Activated B cell treated with CpG ODN at 0.5 μM for 24 hours (primary cell): ENCODE measurements at regions of chr22 and their contacts with region 1.

Region 1: DNA sequence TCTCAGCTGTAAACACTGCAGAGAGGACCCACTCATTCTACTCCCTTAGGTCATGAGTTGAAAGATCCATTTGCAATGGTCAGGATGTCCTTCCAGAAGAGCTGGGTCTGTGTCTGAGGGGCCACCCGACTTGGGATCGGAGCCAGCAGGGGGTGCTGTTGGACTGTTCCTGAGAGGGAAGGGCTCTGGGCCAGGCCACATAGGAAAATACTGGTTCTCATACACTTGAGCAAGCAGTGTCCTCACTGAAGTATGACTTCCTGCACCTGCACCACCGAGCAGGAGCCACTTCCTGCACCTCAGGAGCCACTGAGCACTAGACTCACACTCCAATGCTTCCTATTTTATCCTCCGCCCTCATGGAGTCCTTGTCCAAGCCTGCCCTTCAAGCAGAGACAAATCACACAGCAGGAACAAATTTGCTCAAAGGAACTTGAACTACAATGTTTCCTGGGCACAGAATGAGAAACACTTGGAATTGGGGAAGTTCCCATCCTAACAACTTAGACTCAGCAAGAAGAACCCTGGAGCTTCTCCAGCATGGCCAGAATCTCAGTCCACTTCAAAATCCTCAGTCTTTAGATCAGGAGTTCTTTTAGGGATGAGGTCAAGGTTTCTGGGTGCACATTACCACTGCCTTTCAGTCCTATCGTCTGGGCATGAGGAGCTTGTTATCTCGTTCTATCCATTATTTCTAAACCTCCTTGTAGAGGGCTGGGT is 36.6 kb upstream of the VPREB1 start:
- DNase-seq: peak; percentile 80
- ATAC-seq: peak; percentile 83
- H3K4me3 Mint-ChIP-seq: peak overlapping the region; percentile 70
- H3K27ac Mint-ChIP-seq: peak overlapping the region; percentile 90
- H3K4me1 Mint-ChIP-seq: peaks cover 56% of the 10 kb centered on the region
- H3K27me3 Mint-ChIP-seq: no peaks in the 10 kb centered on the region
- CTCF ChIP-seq: no peak

Region 2: DNA sequence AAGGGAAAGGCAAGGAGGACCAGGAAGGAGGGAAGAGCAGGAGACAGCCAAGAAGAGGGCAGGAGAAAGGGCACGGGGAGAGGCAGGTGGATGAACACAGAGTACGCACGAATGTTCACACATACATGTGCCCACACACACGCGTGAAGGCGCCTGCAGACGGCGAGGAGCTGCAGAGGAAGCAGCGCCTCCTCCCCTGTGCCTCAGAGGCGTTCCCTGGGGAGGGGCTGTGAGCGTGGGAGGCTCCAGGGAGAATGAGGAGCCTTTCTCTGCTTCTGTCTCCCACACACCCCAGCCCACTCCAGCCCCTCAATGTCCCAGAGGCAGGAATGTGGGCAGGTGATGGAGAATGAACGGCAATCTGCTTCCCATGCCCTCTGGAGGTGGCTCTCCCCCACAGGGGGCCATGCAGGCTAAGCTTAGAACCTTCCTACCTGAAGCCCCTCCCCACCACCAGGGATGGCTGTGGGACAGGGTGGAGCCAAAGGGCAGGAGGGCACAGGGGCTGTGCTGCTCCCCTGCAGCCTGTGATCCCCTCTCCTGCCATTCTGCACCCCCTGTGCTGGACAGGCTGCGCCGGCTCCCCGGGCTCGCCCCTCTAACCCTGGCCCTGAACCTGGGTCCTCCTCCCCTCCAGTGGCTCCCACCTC is 280.7 kb before region 1 on chr22:
- CTCF ChIA-PET with region 1: no interaction called
- POLR2A ChIA-PET with region 1: no interaction called
- intact Hi-C with region 1: no loop called
- DNase-seq: no peak
- ATAC-seq: no peak
- H3K4me3 Mint-ChIP-seq: no peak overlapping the region
- H3K27ac Mint-ChIP-seq: no peak overlapping the region
- H3K4me1 Mint-ChIP-seq: peaks cover 4% of the 10 kb centered on the region
- H3K27me3 Mint-ChIP-seq: no peaks in the 10 kb centered on the region
- CTCF ChIP-seq: no peak

Region 3: DNA sequence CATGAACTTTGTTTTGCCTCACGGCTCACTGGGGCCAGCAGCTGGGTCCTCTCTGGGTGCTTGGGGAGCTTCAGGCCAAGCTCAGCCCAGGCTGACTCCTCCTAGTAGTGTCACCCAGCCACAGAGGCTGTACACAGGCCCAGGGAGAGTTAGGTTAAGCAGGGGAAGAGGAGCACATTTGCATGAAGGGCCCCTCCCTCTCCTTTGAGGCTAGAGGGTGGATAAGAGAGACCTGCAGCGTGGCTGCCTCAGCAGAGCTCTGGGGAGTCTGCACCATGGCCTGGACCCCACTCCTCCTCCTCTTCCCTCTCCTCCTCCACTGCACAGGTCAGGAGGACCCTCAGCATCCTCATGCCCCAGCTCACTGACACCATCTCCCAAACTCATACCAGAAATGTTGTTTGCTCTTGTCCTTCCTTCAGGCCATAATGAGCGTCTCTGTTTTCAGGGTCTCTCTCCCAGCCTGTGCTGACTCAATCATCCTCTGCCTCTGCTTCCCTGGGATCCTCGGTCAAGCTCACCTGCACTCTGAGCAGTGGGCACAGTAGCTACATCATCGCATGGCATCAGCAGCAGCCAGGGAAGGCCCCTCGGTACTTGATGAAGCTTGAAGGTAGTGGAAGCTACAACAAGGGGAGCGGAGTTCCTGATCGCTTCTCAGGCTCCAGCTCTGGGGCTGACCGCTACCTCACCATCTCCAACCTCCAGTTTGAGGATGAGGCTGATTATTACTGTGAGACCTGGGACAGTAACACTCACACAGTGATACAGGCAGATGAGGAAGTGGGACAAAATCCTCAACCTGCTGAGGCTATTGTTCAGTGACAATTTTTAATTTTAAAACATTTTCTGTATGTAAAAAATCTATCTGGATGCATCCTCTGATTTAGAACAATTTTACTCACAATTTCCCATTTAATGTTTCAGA is 45.8 kb before region 1 on chr22:
- CTCF ChIA-PET with region 1: interaction called, 36 read pairs
- POLR2A ChIA-PET with region 1: interaction called, 21 read pairs
- intact Hi-C with region 1: no loop called
- DNase-seq: peak; percentile 47
- ATAC-seq: peak; percentile 92
- H3K4me3 Mint-ChIP-seq: peak overlapping the region; percentile 85
- H3K27ac Mint-ChIP-seq: peak overlapping the region; percentile 97
- H3K4me1 Mint-ChIP-seq: peaks cover 83% of the 10 kb centered on the region
- H3K27me3 Mint-ChIP-seq: no peaks in the 10 kb centered on the region
- CTCF ChIP-seq: no peak

Region 4: DNA sequence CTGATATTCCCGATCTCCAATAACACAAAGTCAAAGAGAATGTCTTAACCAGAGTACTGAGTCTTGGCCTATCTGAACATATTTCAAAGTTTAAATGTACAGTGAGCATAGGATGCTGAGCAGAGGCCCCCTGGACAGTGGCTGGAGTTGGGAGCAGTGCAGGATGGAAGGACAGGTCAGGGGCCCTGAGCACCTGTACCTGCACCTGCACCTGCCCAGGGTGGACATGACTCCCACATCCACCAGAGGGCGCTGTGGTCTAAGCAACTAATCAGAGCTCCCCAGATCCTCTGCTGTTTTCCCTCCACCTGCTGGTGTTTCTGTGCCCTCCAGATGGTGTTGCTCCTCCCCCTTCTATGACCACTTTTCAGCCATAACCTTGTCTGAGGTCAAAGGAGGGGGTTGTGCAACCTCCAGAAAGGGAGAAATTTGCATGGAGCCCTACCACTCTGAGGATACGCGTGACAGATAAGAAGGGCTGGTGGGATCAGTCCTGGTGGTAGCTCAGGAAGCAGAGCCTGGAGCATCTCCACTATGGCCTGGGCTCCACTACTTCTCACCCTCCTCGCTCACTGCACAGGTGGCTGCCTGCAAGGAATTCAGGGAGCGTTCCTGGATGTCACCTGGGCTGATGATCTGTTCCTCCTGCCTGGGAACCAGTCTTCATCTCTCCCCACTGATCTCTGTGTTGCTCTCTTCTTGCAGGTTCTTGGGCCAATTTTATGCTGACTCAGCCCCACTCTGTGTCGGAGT is 12.6 kb before region 1 on chr22:
- CTCF ChIA-PET with region 1: interaction called, 35 read pairs
- POLR2A ChIA-PET with region 1: interaction called, 16 read pairs
- intact Hi-C with region 1: loop called (anchors 1 kb)
- DNase-seq: peak; percentile 79
- ATAC-seq: peak; percentile 71
- H3K4me3 Mint-ChIP-seq: peak overlapping the region; percentile 68
- H3K27ac Mint-ChIP-seq: peak overlapping the region; percentile 85
- H3K4me1 Mint-ChIP-seq: peaks cover 59% of the 10 kb centered on the region
- H3K27me3 Mint-ChIP-seq: no peaks in the 10 kb centered on the region
- CTCF ChIP-seq: peak; percentile 80

Region 5: GRCh38 chr22:22235558-22235957 is 27.6 kb after region 1 on chr22:
- CTCF ChIA-PET with region 1: interaction called, 58 read pairs
- POLR2A ChIA-PET with region 1: interaction called, 4 read pairs
- intact Hi-C with region 1: loop called (anchors 1 kb)
- DNase-seq: no peak
- ATAC-seq: no peak
- H3K4me3 Mint-ChIP-seq: peak overlapping the region; percentile 38
- H3K27ac Mint-ChIP-seq: no peak overlapping the region
- H3K4me1 Mint-ChIP-seq: peaks cover 25% of the 10 kb centered on the region
- H3K27me3 Mint-ChIP-seq: peaks cover 2% of the 10 kb centered on the region
- CTCF ChIP-seq: no peak

Region 6: GRCh38 chr22:22422629-22423112 is 214.7 kb after region 1 on chr22:
- CTCF ChIA-PET with region 1: interaction called, 3 read pairs
- POLR2A ChIA-PET with region 1: interaction called, 4 read pairs
- intact Hi-C with region 1: loop called (anchors 1 kb)
- DNase-seq: peak; percentile 79
- ATAC-seq: peak; percentile 99
- H3K4me3 Mint-ChIP-seq: peak overlapping the region; percentile 62
- H3K27ac Mint-ChIP-seq: peak overlapping the region; percentile 70
- H3K4me1 Mint-ChIP-seq: peaks cover 76% of the 10 kb centered on the region
- H3K27me3 Mint-ChIP-seq: no peaks in the 10 kb centered on the region
- CTCF ChIP-seq: peak; percentile 62